HepG2 (cell line): ENCODE measurements at regions of chr2 and their contacts with region 1.

Region 1: GRCh38 chr2:3493615-3494007 is 25.7 kb downstream of the ADI1 start:
- DNase-seq: peak; percentile 72
- ATAC-seq: peak; percentile 87
- H3K4me3 ChIP-seq: peak overlapping the region; percentile 39 to 70 (median 57)
- H3K27ac ChIP-seq: peak overlapping the region; percentile 28
- H3K4me1 ChIP-seq: peaks cover 61% of the 10 kb centered on the region
- H3K27me3 ChIP-seq: no peaks in the 10 kb centered on the region
- CTCF ChIP-seq: no peak
- EP300 ChIP-seq: no peak
- POLR2A ChIP-seq: peak; percentile 43 to 66
- RAD21 ChIP-seq: no peak

Region 2: GRCh38 chr2:3461801-3462492 is 31.7 kb before region 1 on chr2:
- CTCF ChIA-PET with region 1: no interaction called
- POLR2A ChIA-PET with region 1: interaction called, 25 read pairs
- in situ Hi-C with region 1: no loop called
- intact Hi-C with region 1: loop called (anchors 2 kb)
- DNase-seq: peak; percentile 69
- ATAC-seq: no peak
- H3K4me3 ChIP-seq: no peak overlapping the region
- H3K27ac ChIP-seq: no peak overlapping the region
- H3K4me1 ChIP-seq: peaks cover 39% of the 10 kb centered on the region
- H3K27me3 ChIP-seq: no peaks in the 10 kb centered on the region
- CTCF ChIP-seq: peak; percentile 71
- EP300 ChIP-seq: no peak
- POLR2A ChIP-seq: no peak
- RAD21 ChIP-seq: 0 out of 2 replicates have a peak, but pooled peaks have one; percentile 54

Region 3: GRCh38 chr2:3480352-3481012 is 13.1 kb before region 1 on chr2:
- CTCF ChIA-PET with region 1: no interaction called
- POLR2A ChIA-PET with region 1: interaction called, 21 read pairs
- in situ Hi-C with region 1: no loop called
- intact Hi-C with region 1: no loop called
- DNase-seq: peak; percentile 84
- ATAC-seq: peak; percentile 85
- H3K4me3 ChIP-seq: peak overlapping the region in 1 of 3 experiments; percentile 18; a peak in 1 of 6 replicates
- H3K27ac ChIP-seq: peak overlapping the region; percentile 36
- H3K4me1 ChIP-seq: peaks cover 32% of the 10 kb centered on the region
- H3K27me3 ChIP-seq: no peaks in the 10 kb centered on the region
- CTCF ChIP-seq: no peak
- EP300 ChIP-seq: no peak
- POLR2A ChIP-seq: peak in 1 of 2 experiments; percentile 29; a peak in 1 of 4 replicates
- RAD21 ChIP-seq: no peak

Region 4: GRCh38 chr2:3505771-3506170 is 12.2 kb after region 1 on chr2:
- CTCF ChIA-PET with region 1: no interaction called
- POLR2A ChIA-PET with region 1: interaction called, 14 read pairs
- in situ Hi-C with region 1: no loop called
- intact Hi-C with region 1: no loop called
- DNase-seq: no peak
- ATAC-seq: peak; percentile 48
- H3K4me3 ChIP-seq: no peak overlapping the region
- H3K27ac ChIP-seq: no peak overlapping the region
- H3K4me1 ChIP-seq: peaks cover 12% of the 10 kb centered on the region
- H3K27me3 ChIP-seq: no peaks in the 10 kb centered on the region
- CTCF ChIP-seq: no peak
- EP300 ChIP-seq: no peak
- POLR2A ChIP-seq: no peak
- RAD21 ChIP-seq: no peak

Region 5: GRCh38 chr2:3518496-3519254 is 25.1 kb after region 1 on chr2:
- CTCF ChIA-PET with region 1: no interaction called
- POLR2A ChIA-PET with region 1: interaction called, 43 read pairs
- in situ Hi-C with region 1: no loop called
- intact Hi-C with region 1: no loop called
- DNase-seq: peak; percentile 97
- ATAC-seq: peak; percentile 70
- H3K4me3 ChIP-seq: peak overlapping the region; percentile 67 to 88 (median 81)
- H3K27ac ChIP-seq: peak overlapping the region; percentile 96
- H3K4me1 ChIP-seq: peaks cover 74% of the 10 kb centered on the region
- H3K27me3 ChIP-seq: no peaks in the 10 kb centered on the region
- CTCF ChIP-seq: peak; percentile 17; the same call in 1 of the 2 replicates
- EP300 ChIP-seq: no peak
- POLR2A ChIP-seq: peak in 1 of 2 experiments; percentile 91; a peak in 2 of 4 replicates
- RAD21 ChIP-seq: peak; percentile 40

Region 6: DNA sequence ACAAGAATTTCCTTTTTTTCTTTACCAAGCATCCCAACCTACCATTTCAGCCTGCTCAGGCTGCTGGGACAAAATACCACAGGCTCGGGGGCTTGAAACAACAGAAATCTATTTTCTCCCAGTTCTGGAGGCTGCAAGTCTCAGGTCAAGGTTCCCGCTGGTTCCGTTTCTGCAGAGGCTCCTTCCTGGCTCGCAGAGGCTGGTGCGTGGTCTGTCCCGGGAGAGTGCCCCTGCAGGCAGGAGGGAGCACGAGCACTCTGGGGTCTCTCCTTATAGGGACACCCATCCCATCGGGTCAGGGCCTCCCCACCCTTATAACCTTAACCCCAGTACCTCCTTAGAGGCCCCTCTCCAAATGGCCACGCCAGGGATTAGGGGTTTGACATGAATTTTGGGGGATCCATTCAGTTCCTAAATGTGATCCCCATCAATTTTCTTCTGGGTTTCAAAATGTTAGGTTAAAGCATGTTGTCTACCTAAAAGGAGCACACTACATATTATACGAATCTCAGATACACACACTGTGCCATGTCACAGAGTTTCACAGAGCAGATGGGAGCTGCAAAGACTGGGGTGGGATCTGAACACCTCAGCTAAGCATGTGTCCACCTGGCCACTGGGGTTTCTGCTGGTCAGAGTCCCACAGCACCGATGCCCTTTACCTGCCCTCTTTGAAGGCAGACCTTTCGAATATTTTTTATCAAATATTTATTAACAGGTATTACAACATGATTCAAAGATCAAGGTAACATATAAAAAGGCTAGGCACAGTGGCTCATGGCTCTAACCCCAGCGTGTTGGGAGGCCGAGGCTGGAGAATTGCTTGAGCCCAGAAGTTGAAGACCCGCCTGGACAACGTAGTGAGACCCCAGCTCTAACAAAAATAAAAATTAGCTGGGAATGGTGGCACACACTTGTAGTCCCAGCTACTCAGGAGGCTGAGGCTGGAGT is 43.3 kb after region 1 on chr2:
- CTCF ChIA-PET with region 1: no interaction called
- POLR2A ChIA-PET with region 1: interaction called, 22 read pairs
- in situ Hi-C with region 1: no loop called
- intact Hi-C with region 1: loop called (anchors 1 kb)
- DNase-seq: peak; percentile 82
- ATAC-seq: peak; percentile 89
- H3K4me3 ChIP-seq: peak overlapping the region; percentile 59 to 79 (median 73)
- H3K27ac ChIP-seq: peak overlapping the region; percentile 92
- H3K4me1 ChIP-seq: peaks cover 41% of the 10 kb centered on the region
- H3K27me3 ChIP-seq: no peaks in the 10 kb centered on the region; a peak in 1 of 5 replicates
- CTCF ChIP-seq: peak; percentile 82
- EP300 ChIP-seq: no peak
- POLR2A ChIP-seq: no peak; a peak in 1 of 4 replicates
- RAD21 ChIP-seq: peak; percentile 71